AG04450 (cell line): ENCODE measurements at regions of chr1 and their contacts with region 1.

Region 1: DNA sequence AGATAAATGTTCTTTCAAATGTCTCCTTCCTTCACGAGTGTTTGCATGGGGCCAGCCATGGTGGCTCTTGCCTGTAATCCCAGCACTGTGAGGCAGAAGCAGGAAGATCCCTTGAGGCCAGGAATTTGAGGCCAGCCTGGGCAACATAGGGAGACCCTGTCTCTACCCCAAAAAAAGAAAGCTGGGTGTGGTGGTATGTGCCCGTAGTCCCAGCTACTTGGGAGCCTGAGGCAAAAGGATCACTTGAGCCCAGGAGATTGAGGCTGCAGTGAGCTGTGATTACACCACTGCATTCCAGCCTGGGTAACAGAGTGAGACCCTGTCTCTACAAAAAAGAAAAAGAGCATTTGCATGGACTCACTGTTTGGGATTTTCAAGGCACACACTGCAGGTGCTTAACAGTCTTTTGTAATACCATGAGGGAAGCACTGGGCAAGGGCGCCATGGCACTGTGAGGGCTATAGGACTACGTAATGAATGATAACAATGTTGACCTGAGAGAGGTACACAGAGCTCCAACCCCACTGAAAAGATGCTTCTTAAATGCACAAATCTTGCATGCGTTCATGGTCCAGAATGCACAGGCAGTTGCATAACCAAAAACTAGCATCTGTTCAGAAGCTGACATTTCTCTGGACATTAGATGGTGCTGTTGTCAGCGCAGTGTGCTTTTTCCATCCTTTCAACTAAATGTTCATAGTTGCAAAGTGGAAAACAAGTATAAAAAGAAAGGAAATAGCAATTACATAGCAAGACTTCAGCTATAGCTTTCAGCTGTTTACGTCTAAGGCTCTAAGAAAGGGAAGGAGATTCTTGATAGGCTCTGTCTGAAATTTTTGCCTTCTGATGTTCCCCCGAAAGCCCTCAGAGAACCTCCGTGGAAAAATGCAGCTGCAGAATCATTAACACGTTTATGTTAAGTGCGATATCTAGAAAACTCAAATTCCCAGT is 7.8 kb upstream of the TARBP1 start:
- DNase-seq: peak; percentile 77
- H3K4me3 ChIP-seq: no peak overlapping the region
- H3K27ac ChIP-seq: peak overlapping the region; percentile 41
- H3K27me3 ChIP-seq: peaks cover 2% of the 10 kb centered on the region
- CTCF ChIP-seq: peak; percentile 81

Region 2: GRCh38 chr1:234564642-234565037 is 77.9 kb after region 1 on chr1:
- CTCF ChIA-PET with region 1: interaction called, 10 read pairs
- POLR2A ChIA-PET with region 1: no interaction called
- DNase-seq: no peak
- H3K4me3 ChIP-seq: no peak overlapping the region
- H3K27ac ChIP-seq: no peak overlapping the region
- H3K27me3 ChIP-seq: no peaks in the 10 kb centered on the region
- CTCF ChIP-seq: no peak

Region 3: GRCh38 chr1:234599617-234600417 is 113.0 kb after region 1 on chr1:
- CTCF ChIA-PET with region 1: interaction called, 19 read pairs
- POLR2A ChIA-PET with region 1: interaction called, 3 read pairs
- DNase-seq: no peak
- H3K4me3 ChIP-seq: peak overlapping the region; percentile 64
- H3K27ac ChIP-seq: peak overlapping the region; percentile 96
- H3K27me3 ChIP-seq: no peaks in the 10 kb centered on the region
- CTCF ChIP-seq: no peak

Region 4: DNA sequence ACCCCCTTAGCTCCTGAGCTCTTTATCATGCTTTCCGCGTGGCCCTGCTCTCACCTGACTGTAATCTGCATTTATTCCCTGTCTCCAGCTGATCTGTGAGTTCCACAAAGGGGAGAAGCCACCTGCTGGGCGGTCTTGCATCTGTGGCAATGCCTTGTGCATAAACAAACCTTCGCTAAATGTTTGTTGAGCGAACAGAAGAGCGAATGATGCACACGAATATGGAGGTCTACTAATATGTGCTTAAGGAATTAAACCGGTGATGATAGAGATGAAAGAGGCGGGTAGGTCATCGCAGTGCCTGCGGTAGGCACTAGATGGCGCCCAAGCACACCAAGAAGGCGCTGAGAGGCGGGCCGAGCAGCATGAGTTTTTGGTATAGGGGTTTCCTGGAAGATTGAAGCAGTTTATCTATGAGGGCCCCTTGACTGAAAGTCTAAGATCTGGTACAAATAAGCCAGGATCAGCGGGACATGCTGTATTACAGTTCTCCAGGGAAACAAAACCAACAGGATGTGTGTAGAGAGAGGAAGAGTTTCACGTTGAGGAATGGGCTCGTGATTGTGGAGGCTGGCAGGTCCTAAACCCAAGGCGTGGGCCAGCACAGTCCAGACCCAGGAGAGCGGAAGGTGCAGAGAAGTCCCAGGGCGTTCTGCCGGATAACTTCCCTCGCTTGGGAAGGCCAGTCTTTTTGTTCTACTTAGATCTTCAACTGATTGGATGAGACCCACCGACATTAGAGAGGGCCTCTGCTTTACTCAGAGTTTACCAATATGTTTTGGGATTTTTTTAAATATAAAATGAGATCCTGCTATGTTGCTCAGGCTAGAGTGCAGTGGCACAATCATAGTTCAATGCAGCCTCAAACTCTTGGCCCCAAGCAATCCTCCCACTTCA is 607.2 kb after region 1 on chr1:
- CTCF ChIA-PET with region 1: interaction called, 14 read pairs
- POLR2A ChIA-PET with region 1: interaction called, 6 read pairs
- DNase-seq: no peak
- H3K4me3 ChIP-seq: no peak overlapping the region
- H3K27ac ChIP-seq: no peak overlapping the region
- H3K27me3 ChIP-seq: no peaks in the 10 kb centered on the region
- CTCF ChIP-seq: peak; percentile 94

Region 5: DNA sequence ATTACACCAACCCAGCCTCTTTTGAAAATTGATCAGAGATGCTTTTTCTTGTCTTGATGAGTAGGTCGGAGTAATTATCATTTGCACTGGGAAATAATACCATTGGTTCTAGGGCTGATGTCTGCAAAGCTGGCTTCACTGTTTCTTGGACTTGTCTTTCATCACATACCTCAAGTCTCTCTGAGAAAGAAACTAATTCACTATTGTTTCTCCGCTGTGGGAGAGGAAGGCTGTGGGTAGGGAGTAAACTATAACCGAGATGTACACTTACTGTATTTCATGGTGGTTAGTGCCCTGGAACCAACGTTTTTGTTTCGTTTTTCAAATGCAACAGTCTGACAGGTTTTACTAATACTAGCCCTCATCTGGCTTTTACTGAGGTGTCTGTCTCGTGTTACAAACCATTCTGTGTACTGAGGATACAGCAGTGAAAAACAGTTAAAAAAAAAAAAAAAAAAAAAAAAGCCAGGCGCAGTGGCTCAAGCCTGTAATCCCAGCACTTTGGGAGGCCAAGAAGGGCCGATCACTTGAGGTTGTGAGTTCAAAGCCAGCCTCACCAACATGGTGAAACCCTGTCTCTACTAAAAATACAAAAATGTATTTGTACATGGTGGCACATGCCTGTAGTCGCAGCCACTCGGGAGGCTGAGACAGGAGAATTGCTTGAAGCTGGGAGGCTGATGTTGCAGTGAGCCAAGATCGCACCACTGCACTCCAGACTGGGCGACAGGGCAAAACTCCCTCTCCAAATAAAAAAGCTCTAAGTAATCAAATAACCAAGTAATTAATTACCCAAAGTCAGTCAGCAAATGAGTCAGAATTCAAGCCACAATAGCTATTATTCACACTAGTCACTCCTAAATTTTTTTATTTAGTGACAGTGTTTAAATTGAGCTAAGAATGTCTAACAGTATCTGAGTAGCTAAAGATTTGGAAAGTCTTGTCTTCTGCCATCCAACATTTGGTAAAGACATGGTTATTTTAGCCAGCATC is 618.6 kb after region 1 on chr1:
- CTCF ChIA-PET with region 1: interaction called, 10 read pairs
- POLR2A ChIA-PET with region 1: no interaction called
- DNase-seq: no peak
- H3K4me3 ChIP-seq: no peak overlapping the region
- H3K27ac ChIP-seq: no peak overlapping the region
- H3K27me3 ChIP-seq: no peaks in the 10 kb centered on the region
- CTCF ChIP-seq: no peak